ENCODE measurements at regions of chr5 and their contacts with region 1.

Region 1: DNA sequence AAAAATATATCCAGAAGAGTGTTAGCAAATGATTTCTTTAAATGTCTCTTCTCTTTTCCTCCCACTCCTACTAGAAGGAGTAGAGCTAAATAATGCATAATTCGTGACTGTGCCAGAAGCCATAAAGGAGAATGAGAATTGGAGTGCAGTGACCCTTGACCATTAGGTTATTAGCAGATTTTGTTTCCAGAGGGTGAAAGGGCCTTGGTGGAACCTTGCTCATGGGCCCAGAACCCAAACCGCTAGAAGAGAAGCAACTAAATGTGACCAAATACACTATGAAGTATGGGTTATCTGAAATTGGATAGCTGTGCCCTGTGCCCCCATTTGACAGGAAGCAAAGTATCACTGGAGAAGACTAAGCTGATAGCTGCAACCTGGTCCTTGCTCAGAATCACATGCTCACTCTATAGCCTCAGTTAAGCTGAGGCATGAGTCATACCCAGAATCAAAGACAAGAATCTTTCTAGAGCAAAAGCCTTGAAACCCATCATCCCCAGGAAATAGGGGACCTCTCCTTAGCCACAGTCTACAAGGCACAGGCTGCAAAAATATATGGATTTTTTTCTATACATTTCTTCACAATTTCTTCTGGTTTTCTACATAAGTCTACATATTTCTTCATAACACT is 36.3 kb downstream of the CAPSL start:
- DNase-seq: peak; percentile 50
- H3K4me3 Mint-ChIP-seq: peak overlapping the region; percentile 2
- H3K27ac Mint-ChIP-seq: peak overlapping the region; percentile 37
- H3K4me1 Mint-ChIP-seq: peaks cover 82% of the 10 kb centered on the region
- H3K27me3 Mint-ChIP-seq: peaks cover 7% of the 10 kb centered on the region

Region 2: DNA sequence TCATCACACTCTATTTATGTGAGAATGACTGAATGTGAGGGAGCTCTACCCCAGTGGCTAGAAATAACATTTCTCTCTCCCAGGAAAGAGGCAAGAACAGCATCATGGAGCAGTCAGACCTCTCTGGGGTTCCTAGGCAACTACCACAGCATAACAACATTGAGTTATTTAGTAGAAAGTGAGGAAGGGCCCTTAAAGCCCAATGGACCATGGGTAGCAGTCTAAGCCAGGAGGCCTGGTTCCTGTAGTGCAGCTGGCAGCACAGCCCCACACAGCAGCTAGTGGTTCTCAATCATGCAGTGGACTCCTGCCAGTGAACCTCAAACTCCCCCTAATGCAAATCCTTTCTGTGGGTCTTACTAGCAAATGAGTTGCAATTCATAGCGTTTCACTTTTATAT is 229.2 kb before region 1 on chr5:
- intact Hi-C with region 1: loop called (anchors 1 kb)
- DNase-seq: peak; percentile 29
- H3K4me3 Mint-ChIP-seq: peak overlapping the region; percentile 10
- H3K27ac Mint-ChIP-seq: peak overlapping the region; percentile 59
- H3K4me1 Mint-ChIP-seq: peaks cover 65% of the 10 kb centered on the region
- H3K27me3 Mint-ChIP-seq: no peaks in the 10 kb centered on the region

Region 3: GRCh38 chr5:35785601-35786085 is 116.5 kb before region 1 on chr5:
- intact Hi-C with region 1: loop called (anchors 2 kb)
- DNase-seq: peak; percentile 30
- H3K4me3 Mint-ChIP-seq: peak overlapping the region; percentile 24
- H3K27ac Mint-ChIP-seq: peak overlapping the region; percentile 86
- H3K4me1 Mint-ChIP-seq: peaks cover 90% of the 10 kb centered on the region
- H3K27me3 Mint-ChIP-seq: no peaks in the 10 kb centered on the region

Region 4: DNA sequence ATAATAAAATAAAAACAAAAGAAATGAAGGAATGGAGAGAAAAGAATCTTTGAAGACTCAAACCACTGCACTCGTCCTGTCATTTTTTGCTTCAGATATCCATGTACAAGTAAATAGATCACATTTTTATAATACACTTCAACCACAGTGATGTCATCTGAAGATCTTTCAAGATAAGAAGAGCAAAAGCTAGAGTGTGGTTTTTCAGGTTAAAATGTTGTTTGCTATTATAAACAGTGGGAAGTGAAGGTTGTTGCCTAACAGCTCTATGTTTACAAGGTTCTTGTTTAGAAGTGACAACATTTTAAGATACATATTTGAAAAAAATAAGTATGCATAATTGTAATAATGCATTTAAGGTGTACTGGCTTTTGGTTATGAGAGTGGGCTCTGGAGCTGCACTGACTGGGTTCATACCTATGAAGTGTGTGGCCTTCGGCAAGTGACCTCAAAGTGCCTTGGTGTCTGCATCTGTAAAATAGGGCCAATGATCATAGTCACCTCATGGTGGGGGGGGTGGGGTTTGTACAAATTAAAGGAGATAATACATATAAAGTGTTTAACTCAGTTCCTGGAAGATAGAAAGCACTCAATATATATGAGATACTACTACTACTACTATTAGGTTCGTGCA is 90.9 kb before region 1 on chr5:
- intact Hi-C with region 1: loop called (anchors 1 kb)
- DNase-seq: no peak
- H3K4me3 Mint-ChIP-seq: peak overlapping the region; percentile 70
- H3K27ac Mint-ChIP-seq: peak overlapping the region; percentile 98
- H3K4me1 Mint-ChIP-seq: peaks cover 56% of the 10 kb centered on the region
- H3K27me3 Mint-ChIP-seq: no peaks in the 10 kb centered on the region

Region 5: DNA sequence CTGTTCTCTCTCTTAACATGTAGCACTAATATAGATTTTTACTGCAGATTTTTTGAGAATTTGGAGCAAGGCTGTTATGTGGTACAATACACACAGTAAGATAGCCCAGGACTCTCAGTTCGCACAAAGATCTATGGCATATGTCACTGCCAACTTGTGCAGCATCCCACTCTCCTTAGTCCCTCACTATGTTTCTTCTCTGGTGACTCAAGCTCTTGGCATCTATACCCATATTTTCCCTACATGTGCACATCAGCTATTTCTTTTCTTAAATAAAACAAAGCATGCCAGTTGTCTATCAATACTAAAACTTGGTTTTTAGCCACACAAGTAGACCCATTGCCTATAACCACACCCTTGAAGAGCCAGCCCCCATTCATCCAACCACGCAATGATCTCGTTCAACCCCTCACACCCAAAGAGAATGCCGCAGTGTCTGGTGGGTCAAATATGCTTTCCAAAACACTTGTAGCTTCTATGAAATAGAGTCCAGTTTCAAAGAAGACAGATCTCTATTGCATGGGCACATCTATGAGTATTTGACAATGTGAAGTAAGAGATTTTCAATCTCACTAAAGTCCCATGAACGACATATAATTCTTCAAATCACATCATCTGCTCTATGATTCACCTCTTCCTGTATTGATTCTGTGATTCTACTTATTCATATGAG is 63.7 kb before region 1 on chr5:
- intact Hi-C with region 1: loop called (anchors 1 kb)
- DNase-seq: no peak
- H3K4me3 Mint-ChIP-seq: no peak overlapping the region
- H3K27ac Mint-ChIP-seq: peak overlapping the region; percentile 65
- H3K4me1 Mint-ChIP-seq: peaks cover 60% of the 10 kb centered on the region
- H3K27me3 Mint-ChIP-seq: no peaks in the 10 kb centered on the region

Region 6: GRCh38 chr5:35884115-35884788 is 17.9 kb before region 1 on chr5:
- intact Hi-C with region 1: loop called (anchors 1 kb)
- DNase-seq: no peak
- H3K4me3 Mint-ChIP-seq: peak overlapping the region; percentile 47
- H3K27ac Mint-ChIP-seq: peak overlapping the region; percentile 88
- H3K4me1 Mint-ChIP-seq: peaks cover 49% of the 10 kb centered on the region
- H3K27me3 Mint-ChIP-seq: peaks cover 2% of the 10 kb centered on the region

Region 7: GRCh38 chr5:35919191-35919590 is 17.0 kb after region 1 on chr5:
- intact Hi-C with region 1: loop called (anchors 1 kb)
- DNase-seq: no peak
- H3K4me3 Mint-ChIP-seq: no peak overlapping the region
- H3K27ac Mint-ChIP-seq: peak overlapping the region; percentile 81
- H3K4me1 Mint-ChIP-seq: peaks cover 35% of the 10 kb centered on the region
- H3K27me3 Mint-ChIP-seq: peaks cover 3% of the 10 kb centered on the region

Region 8: DNA sequence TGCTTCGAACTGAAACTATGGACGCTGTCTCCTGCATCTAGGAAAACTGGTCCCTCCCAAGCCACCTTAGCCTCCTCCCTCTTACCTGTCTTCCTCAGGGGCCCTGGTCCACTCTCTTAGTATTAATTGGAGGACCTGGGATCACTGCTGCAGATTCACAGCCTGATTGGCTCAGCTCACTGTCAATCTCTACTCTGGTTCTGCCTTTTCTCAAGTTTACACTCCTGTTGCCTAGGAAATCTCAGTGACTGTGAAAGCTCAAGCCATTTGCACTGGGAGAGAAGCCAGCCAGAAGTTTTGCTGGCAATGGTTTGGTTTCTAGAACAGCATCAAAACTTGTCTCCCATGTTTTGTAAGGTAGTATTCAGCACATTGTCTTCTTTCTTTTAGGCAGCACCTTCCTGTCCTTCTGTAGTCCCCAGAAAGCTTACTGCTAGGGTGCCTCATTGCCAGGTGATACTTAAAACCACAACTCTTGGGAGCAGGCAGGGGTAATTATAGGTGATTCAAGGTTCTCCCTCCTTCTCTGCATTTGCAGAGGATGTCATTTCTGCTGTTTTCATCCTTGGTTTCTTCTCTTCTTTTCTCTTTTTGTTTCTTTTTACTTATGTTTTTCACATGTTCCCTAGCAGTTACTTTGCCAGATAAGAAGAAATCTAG is 36.5 kb after region 1 on chr5 and contains the start of gene CAPSL:
- intact Hi-C with region 1: no loop called
- DNase-seq: no peak
- H3K4me3 Mint-ChIP-seq: no peak within 1 kb of the TSS
- H3K27ac Mint-ChIP-seq: no peak within 1 kb of the TSS
- H3K4me1 Mint-ChIP-seq: no peaks in the 10 kb centered on the region
- H3K27me3 Mint-ChIP-seq: peaks cover 14% of the 10 kb centered on the region
- total RNA-seq, gene CAPSL: not detected in 2 replicates

Measured in activated T-helper 1 cell treated with anti-CD3 and anti-CD28 coated beads, Interleukin-12 subunit alpha, Interleukin-12 subunit beta, Interleukin-2, Interleukin-4 antibody, amounts not matched to agents 30 ng/mL and 10 ng/mL and 1 ng/mL, durations not matched to agents 14 hours and 24 hours and 36 hours (primary cell).